GM12878 (cell line): ENCODE measurements at regions of chr7 and their contacts with region 1.

Region 1: GRCh38 chr7:92421676-92422435 is 25.4 kb upstream of the GATAD1 start:
- DNase-seq: no peak
- ATAC-seq: no peak
- H3K4me3 ChIP-seq: no peak overlapping the region
- H3K27ac ChIP-seq: no peak overlapping the region
- H3K4me1 ChIP-seq: peaks cover 5% of the 10 kb centered on the region; the same call in 1 of the 2 replicates
- H3K27me3 ChIP-seq: no peaks in the 10 kb centered on the region
- CTCF ChIP-seq: no peak
- EP300 ChIP-seq: no peak
- POLR2A ChIP-seq: no peak
- RAD21 ChIP-seq: no peak

Region 2: GRCh38 chr7:92325858-92326257 is 96.0 kb before region 1 on chr7:
- CTCF ChIA-PET with region 1: no interaction called
- POLR2A ChIA-PET with region 1: no interaction called
- RAD21 ChIA-PET with region 1: no interaction called
- SMC1A ChIA-PET with region 1: no interaction called
- in situ Hi-C with region 1: no loop called
- intact Hi-C with region 1: no loop called
- DNase-seq: no peak
- ATAC-seq: no peak
- H3K4me3 ChIP-seq: no peak overlapping the region
- H3K27ac ChIP-seq: no peak overlapping the region
- H3K4me1 ChIP-seq: no peaks in the 10 kb centered on the region
- H3K27me3 ChIP-seq: no peaks in the 10 kb centered on the region
- CTCF ChIP-seq: no peak
- EP300 ChIP-seq: no peak
- POLR2A ChIP-seq: no peak
- RAD21 ChIP-seq: no peak

Region 3: GRCh38 chr7:92404170-92404614 is 17.7 kb before region 1 on chr7:
- CTCF ChIA-PET with region 1: interaction called, 15 read pairs
- POLR2A ChIA-PET with region 1: no interaction called
- RAD21 ChIA-PET with region 1: no interaction called
- SMC1A ChIA-PET with region 1: interaction called, 3 read pairs
- in situ Hi-C with region 1: no loop called
- intact Hi-C with region 1: no loop called
- DNase-seq: no peak
- ATAC-seq: peak; percentile 37
- H3K4me3 ChIP-seq: no peak overlapping the region
- H3K27ac ChIP-seq: no peak overlapping the region
- H3K4me1 ChIP-seq: no peaks in the 10 kb centered on the region
- H3K27me3 ChIP-seq: no peaks in the 10 kb centered on the region
- CTCF ChIP-seq: no peak
- EP300 ChIP-seq: no peak
- POLR2A ChIP-seq: no peak
- RAD21 ChIP-seq: peak; percentile 34; the same call in 1 of the 2 replicates

Region 4: GRCh38 chr7:92461027-92462003 is 39.5 kb after region 1 on chr7:
- CTCF ChIA-PET with region 1: interaction called, 16 read pairs
- POLR2A ChIA-PET with region 1: no interaction called
- RAD21 ChIA-PET with region 1: interaction called, 3 read pairs
- SMC1A ChIA-PET with region 1: interaction called, 5 read pairs
- in situ Hi-C with region 1: no loop called
- intact Hi-C with region 1: no loop called
- DNase-seq: no peak
- ATAC-seq: peak; percentile 99
- H3K4me3 ChIP-seq: no peak overlapping the region
- H3K27ac ChIP-seq: no peak overlapping the region
- H3K4me1 ChIP-seq: no peaks in the 10 kb centered on the region
- H3K27me3 ChIP-seq: no peaks in the 10 kb centered on the region
- CTCF ChIP-seq: peak; percentile 67 to 78 (median 69)
- EP300 ChIP-seq: no peak
- POLR2A ChIP-seq: no peak
- RAD21 ChIP-seq: peak; percentile 49